ENCODE measurements at regions of chr15 and their contacts with region 1.

Region 1: DNA sequence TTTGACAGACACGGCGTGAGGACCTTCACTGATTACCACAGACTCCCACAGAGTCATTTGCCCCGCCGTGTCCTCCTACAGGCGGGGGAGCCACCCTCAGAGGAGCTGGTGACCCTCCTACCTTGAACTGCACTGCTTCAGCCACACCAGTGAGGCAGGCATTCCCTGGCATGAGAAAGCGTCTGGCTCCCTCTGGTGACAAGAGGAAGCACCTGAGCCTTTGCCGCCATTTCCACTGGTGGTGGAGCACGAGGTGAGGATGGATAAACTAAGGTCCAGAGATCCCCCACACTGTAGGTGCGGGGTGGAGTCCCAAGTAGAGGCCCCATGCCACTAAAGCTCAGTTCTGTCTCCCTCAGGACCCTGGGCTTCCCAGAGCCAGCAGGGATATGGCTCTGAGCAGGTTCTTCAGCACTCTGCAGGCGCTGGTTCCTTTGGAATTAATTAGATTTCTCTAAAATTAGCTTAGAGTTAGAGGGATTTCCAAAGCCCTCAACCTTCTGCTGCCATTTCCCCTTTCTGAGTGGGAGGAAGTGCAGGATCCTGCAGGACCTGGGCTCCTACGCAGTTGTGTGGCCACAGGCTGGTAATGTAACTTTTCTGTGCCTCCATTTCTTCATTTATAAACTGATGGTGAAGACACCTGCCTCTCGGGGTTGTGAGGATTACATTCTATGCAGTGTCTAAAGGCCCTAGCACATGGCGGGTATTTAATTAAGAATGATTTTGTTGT is 224.0 kb downstream of the SLCO3A1 start:
- DNase-seq: peak; percentile 38 to 80
- H3K4me3 ChIP-seq: no peak overlapping the region
- H3K27ac ChIP-seq: no peak overlapping the region
- H3K4me1 ChIP-seq: peaks cover 0 to 2% (median 0%) of the 10 kb centered on the region in 4 experiments; a peak in 2 of 7 replicates
- H3K27me3 ChIP-seq: no peaks in the 10 kb centered on the region
- CTCF ChIP-seq: peak; percentile 93 to 97 (median 96)
- EP300 ChIP-seq: no peak
- POLR2A ChIP-seq: no peak
- RAD21 ChIP-seq: peak; percentile 97 to 99

Region 2: GRCh38 chr15:91302588-91303439 is 774.7 kb before region 1 on chr15:
- CTCF ChIA-PET with region 1: interaction called, 26 read pairs
- POLR2A ChIA-PET with region 1: no interaction called
- DNase-seq: peak; percentile 31 to 52
- H3K4me3 ChIP-seq: no peak overlapping the region
- H3K27ac ChIP-seq: no peak overlapping the region
- H3K4me1 ChIP-seq: no peaks in the 10 kb centered on the region
- H3K27me3 ChIP-seq: peaks cover 0 to 3% (median 2%) of the 10 kb centered on the region in 4 experiments; a peak in 3 of 7 replicates
- CTCF ChIP-seq: peak; percentile 18 to 82 (median 77)
- EP300 ChIP-seq: no peak
- POLR2A ChIP-seq: no peak
- RAD21 ChIP-seq: peak; percentile 98 to 99

Region 3: GRCh38 chr15:91867581-91868026 is 209.9 kb before region 1 on chr15:
- CTCF ChIA-PET with region 1: interaction called, 17 read pairs
- POLR2A ChIA-PET with region 1: no interaction called
- DNase-seq: no peak
- H3K4me3 ChIP-seq: no peak overlapping the region
- H3K27ac ChIP-seq: no peak overlapping the region
- H3K4me1 ChIP-seq: peaks cover 0 to 13% (median 9%) of the 10 kb centered on the region in 4 experiments; a peak in 6 of 7 replicates
- H3K27me3 ChIP-seq: no peaks in the 10 kb centered on the region
- CTCF ChIP-seq: no peak
- EP300 ChIP-seq: no peak
- POLR2A ChIP-seq: no peak
- RAD21 ChIP-seq: no peak

Region 4: DNA sequence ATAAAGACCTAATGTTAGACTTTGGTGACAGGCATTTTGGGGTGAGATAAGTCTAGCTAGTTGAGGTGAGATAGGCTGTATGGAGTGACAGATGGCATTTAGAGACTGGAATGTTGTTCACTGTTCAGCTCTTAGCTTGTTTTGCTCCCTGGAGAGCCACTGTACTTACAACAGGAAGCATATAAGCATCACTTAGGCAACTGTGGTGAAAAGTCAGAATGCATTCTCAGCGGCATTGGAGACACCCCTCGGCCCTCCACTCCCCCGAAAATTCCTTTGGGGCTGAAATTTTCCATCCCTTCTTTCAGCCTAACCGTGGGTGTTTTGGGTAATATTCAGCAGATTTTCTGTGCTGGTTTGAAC is 150.6 kb before region 1 on chr15:
- CTCF ChIA-PET with region 1: interaction called, 13 read pairs
- POLR2A ChIA-PET with region 1: no interaction called
- DNase-seq: no peak
- H3K4me3 ChIP-seq: peak overlapping the region in 1 of 4 experiments; percentile 14; a peak in 1 of 8 replicates
- H3K27ac ChIP-seq: no peak overlapping the region
- H3K4me1 ChIP-seq: peaks cover 11 to 41% (median 31%) of the 10 kb centered on the region in 4 experiments
- H3K27me3 ChIP-seq: no peaks in the 10 kb centered on the region; a peak in 1 of 7 replicates
- CTCF ChIP-seq: no peak
- EP300 ChIP-seq: no peak
- POLR2A ChIP-seq: no peak
- RAD21 ChIP-seq: no peak

Region 5: DNA sequence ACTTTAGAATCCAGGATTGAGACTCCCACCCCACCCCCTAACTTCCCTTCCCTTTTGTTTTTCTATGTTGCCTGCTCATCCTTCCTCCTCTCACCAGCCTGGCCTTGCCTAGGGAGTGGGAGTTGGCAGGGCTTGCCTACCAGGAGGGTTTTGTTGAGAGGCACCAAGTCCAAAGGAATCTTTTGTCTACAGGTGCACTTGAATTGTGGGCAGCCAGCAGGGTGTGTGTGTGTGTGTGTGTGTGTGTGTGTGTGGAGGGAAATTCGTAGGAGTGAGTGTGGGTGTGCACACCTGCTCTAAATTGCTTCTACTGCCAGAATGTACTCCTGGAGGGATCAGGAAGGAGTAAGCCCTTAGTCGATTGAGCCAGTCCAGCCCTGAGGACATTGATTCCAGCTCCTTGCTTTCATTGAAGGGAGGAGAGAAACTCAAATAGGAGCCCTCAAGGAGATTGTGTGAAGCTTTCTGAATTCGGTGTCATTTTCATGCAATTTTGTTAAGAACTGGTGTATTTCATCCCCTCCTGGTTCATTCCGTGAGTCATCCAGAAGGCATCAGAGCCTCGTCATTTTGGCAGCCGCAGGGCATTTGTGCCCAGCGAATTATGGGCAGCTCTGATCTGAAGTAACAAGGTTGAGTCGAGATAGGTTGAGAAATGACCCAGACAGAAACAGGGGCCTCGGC is 111.9 kb before region 1 on chr15:
- CTCF ChIA-PET with region 1: interaction called, 79 read pairs
- POLR2A ChIA-PET with region 1: no interaction called
- DNase-seq: no peak
- H3K4me3 ChIP-seq: no peak overlapping the region
- H3K27ac ChIP-seq: no peak overlapping the region
- H3K4me1 ChIP-seq: peaks cover 0 to 4% (median 2%) of the 10 kb centered on the region in 4 experiments; a peak in 5 of 7 replicates
- H3K27me3 ChIP-seq: no peaks in the 10 kb centered on the region
- CTCF ChIP-seq: no peak
- EP300 ChIP-seq: no peak
- POLR2A ChIP-seq: no peak
- RAD21 ChIP-seq: no peak

Region 6: GRCh38 chr15:92035961-92036360 is 41.6 kb before region 1 on chr15:
- CTCF ChIA-PET with region 1: interaction called, 10 read pairs
- POLR2A ChIA-PET with region 1: no interaction called
- DNase-seq: no peak
- H3K4me3 ChIP-seq: no peak overlapping the region
- H3K27ac ChIP-seq: no peak overlapping the region
- H3K4me1 ChIP-seq: peaks cover 2 to 10% (median 7%) of the 10 kb centered on the region in 4 experiments; a peak in 5 of 7 replicates
- H3K27me3 ChIP-seq: no peaks in the 10 kb centered on the region
- CTCF ChIP-seq: no peak
- EP300 ChIP-seq: no peak
- POLR2A ChIP-seq: no peak
- RAD21 ChIP-seq: no peak